ENCODE measurements at regions of chr5 and their contacts with region 1.

Region 1: DNA sequence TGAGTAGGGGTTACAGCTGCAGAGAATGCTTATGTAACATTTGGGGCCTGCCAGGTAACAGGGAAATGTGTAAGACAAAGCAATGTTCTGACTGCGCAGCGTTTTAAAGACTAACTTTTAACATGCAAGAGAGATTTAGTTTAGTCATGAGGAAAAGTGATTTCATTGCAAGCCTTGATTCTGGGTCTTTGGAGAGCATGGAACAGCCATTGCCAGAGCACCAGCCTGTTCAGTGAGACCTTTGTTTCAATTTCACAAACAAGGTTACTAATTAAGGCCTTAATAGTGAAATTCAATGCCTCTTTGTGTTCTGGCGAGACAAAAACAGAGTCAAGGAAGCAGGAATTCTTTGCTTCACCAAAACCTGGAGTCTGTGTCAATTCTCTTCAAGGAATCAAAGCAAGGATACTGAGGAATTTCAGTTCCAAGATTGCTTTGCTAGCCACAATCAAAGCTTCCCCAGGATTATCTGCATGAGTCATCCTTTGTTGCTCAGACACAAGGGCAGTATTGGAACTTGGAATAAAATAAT is 14.4 kb downstream of the CKMT2 start:
- DNase-seq: no peak
- ATAC-seq: no peak
- H3K4me3 ChIP-seq: no peak overlapping the region
- H3K4me3 Mint-ChIP-seq: no peak overlapping the region
- H3K27ac ChIP-seq: no peak overlapping the region
- H3K27ac Mint-ChIP-seq: no peak overlapping the region
- H3K4me1 ChIP-seq: no peaks in the 10 kb centered on the region
- H3K4me1 Mint-ChIP-seq: no peaks in the 10 kb centered on the region
- H3K27me3 ChIP-seq: no peaks in the 10 kb centered on the region
- H3K27me3 Mint-ChIP-seq: no peaks in the 10 kb centered on the region

Region 2: DNA sequence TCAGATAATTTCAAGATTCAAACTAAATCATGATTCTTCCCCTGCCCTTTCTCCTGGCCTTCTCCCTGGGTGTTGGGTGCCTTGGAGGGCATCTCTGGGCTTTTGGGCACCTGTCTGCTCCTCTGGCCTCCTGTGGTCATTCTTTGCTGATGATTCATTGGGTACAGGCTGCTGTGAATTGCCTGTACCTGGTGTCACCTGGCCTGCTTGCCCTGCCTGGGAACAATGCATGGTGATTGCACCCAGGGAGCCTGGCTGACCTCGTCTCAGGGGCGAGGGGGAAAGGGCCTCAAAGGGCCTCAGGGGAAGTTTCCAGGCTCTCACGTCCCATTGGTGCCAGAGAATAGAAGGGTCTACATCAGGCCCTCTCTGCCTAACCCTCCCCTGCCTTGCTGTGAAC is 34.4 kb before region 1 on chr5:
- CTCF ChIA-PET with region 1: no interaction called
- POLR2A ChIA-PET with region 1: interaction called in 1 of 2 experiments, 19 read pairs
- DNase-seq: no peak
- ATAC-seq: no peak
- H3K4me3 ChIP-seq: no peak overlapping the region
- H3K4me3 Mint-ChIP-seq: no peak overlapping the region
- H3K27ac ChIP-seq: no peak overlapping the region
- H3K27ac Mint-ChIP-seq: peak overlapping the region in 1 of 2 donors; percentile 20
- H3K4me1 ChIP-seq: no peaks in the 10 kb centered on the region
- H3K4me1 Mint-ChIP-seq: no peaks in the 10 kb centered on the region
- H3K27me3 ChIP-seq: no peaks in the 10 kb centered on the region
- H3K27me3 Mint-ChIP-seq: no peaks in the 10 kb centered on the region

Measured in T-cell (primary cell).